ENCODE measurements at regions of chrX and their contacts with region 1.

Region 1: DNA sequence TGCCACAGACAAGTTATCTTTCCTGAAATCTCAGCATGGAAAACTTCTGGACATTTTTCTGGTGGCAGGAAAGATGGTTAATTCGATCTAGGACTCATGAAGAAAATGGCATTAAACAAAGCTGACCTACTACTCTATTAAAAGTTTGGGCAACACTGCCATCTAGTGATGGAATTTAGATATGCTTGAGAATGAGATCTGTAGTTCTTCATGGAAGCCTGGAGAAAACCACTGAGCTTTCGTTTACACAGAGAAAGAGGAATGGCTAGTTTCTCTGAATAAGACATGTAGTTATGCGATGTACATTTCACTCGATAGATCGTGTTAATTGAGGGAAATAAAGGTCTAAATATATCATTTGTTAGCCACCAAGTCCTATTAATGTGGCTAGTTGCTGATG is 51.7 kb upstream of the CHRDL1 start:
- DNase-seq: no peak
- H3K4me3 ChIP-seq: no peak overlapping the region
- H3K27ac ChIP-seq: no peak overlapping the region
- H3K4me1 ChIP-seq: no peaks in the 10 kb centered on the region
- H3K27me3 ChIP-seq: no peaks in the 10 kb centered on the region
- CTCF ChIP-seq: peak in 2 of 3 experiments; percentile 64 to 68

Region 2: DNA sequence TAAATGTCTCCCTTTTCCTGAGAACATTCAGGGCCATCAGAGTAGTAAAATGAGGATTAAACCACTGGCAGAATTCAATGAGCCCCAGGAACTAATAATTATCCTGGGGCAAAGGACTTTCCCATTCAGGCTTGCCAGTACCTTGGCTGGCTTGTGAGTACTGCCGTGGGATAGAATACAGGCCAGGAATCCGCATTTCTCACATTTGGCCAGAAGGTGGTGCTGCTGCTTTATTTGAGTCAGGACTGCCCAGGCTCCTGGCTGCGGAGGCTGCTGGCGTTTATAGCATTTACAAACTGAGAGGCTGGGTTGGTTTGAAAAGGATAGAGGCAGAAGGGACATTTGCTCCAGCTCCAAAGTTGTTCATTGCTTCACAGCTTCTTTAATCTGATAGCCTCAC is 397.3 kb before region 1 on chrX:
- intact Hi-C with region 1: loop called (anchors 1 kb)
- DNase-seq: peak in 1 of 2 donors; percentile 86
- H3K4me3 ChIP-seq: no peak overlapping the region
- H3K27ac ChIP-seq: no peak overlapping the region
- H3K4me1 ChIP-seq: no peaks in the 10 kb centered on the region
- H3K27me3 ChIP-seq: no peaks in the 10 kb centered on the region
- CTCF ChIP-seq: peak; percentile 41 to 76 (median 63)

Region 3: DNA sequence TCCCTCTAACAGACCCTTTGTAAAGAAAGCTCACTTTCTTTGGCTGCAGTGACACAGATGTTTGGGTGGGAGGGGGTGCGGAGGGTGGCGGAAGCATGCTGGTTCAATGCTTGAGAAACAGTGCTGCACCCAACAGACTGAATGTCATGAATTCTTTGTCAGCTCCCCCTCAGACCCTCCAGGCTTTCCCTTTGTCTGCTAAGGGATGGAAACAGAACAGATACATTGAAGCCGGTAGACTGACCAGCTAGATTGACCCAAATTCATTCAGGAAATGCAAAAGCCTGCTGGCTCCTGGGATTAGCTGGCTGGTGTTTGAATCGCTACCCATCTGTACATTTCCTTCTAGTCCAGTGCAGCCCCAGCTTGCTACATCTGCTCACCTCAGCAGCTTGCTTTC is 157.8 kb after region 1 on chrX:
- intact Hi-C with region 1: no loop called
- DNase-seq: no peak
- H3K4me3 ChIP-seq: no peak overlapping the region
- H3K27ac ChIP-seq: no peak overlapping the region
- H3K4me1 ChIP-seq: no peaks in the 10 kb centered on the region
- H3K27me3 ChIP-seq: no peaks in the 10 kb centered on the region
- CTCF ChIP-seq: no peak

Region 4: DNA sequence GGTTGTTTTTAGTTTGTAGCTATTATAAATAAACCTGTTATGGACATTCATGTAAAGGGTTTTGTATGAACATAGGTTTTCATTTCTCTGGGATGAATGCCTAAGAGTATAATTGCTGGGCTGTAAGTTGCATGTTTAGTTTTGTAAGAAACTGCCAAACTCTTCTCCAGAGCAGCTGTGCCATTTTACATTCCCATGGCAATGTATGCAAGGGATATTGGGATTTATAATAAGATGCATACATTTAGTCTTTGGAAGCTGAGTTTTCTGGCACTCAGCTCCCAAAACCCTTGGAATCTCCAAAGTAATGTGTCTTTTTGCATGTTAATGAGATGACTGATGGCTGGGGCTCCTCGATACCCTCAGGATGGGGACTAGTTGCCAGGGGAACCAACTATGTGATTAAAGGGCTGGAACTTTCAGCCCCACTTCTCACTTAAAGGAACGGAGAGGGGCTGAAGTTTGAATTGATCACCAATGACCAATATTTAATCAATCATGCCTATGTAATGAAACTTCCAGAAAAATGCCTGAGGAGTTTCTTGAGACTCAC is 708.1 kb after region 1 on chrX:
- intact Hi-C with region 1: no loop called
- DNase-seq: no peak
- H3K4me3 ChIP-seq: no peak overlapping the region
- H3K27ac ChIP-seq: no peak overlapping the region
- H3K4me1 ChIP-seq: no peaks in the 10 kb centered on the region
- H3K27me3 ChIP-seq: no peaks in the 10 kb centered on the region
- CTCF ChIP-seq: no peak